A673 (cell line): ENCODE measurements at regions of chr13 and their contacts with region 1.

Region 1: GRCh38 chr13:29693275-29693961 is 97.9 kb upstream of the SLC7A1 start:
- DNase-seq: no peak
- H3K4me3 ChIP-seq: no peak overlapping the region
- H3K27ac ChIP-seq: no peak overlapping the region
- H3K4me1 ChIP-seq: no peaks in the 10 kb centered on the region
- H3K27me3 ChIP-seq: no peaks in the 10 kb centered on the region
- CTCF ChIP-seq: no peak

Region 2: GRCh38 chr13:28805193-28805819 is 888.1 kb before region 1 on chr13:
- CTCF ChIA-PET with region 1: no interaction called
- POLR2A ChIA-PET with region 1: no interaction called
- intact Hi-C with region 1: no loop called
- DNase-seq: peak; percentile 44
- H3K4me3 ChIP-seq: no peak overlapping the region
- H3K27ac ChIP-seq: no peak overlapping the region
- H3K4me1 ChIP-seq: no peaks in the 10 kb centered on the region
- H3K27me3 ChIP-seq: peaks cover 7% of the 10 kb centered on the region
- CTCF ChIP-seq: peak; percentile 72

Region 3: GRCh38 chr13:29496240-29496712 is 197.1 kb before region 1 on chr13:
- CTCF ChIA-PET with region 1: no interaction called
- POLR2A ChIA-PET with region 1: interaction called, 12 read pairs
- intact Hi-C with region 1: no loop called
- DNase-seq: no peak
- H3K4me3 ChIP-seq: no peak overlapping the region
- H3K27ac ChIP-seq: no peak overlapping the region
- H3K4me1 ChIP-seq: no peaks in the 10 kb centered on the region
- H3K27me3 ChIP-seq: peaks cover 9% of the 10 kb centered on the region
- CTCF ChIP-seq: no peak